ENCODE measurements at regions of chr12 and their contacts with region 1.

Region 1: GRCh38 chr12:4276524-4277204 is 3.1 kb downstream of the CCND2 start:
- DNase-seq: peak; percentile 78 to 86 (median 79)
- H3K4me3 ChIP-seq: peak overlapping the region; percentile 79
- H3K27ac ChIP-seq: no peak overlapping the region
- H3K4me1 ChIP-seq: peaks cover 12% of the 10 kb centered on the region
- H3K27me3 ChIP-seq: no peaks in the 10 kb centered on the region
- CTCF ChIP-seq: peak; percentile 47 to 83 (median 73)
- EP300 ChIP-seq: no peak
- POLR2A ChIP-seq: no peak

Region 2: DNA sequence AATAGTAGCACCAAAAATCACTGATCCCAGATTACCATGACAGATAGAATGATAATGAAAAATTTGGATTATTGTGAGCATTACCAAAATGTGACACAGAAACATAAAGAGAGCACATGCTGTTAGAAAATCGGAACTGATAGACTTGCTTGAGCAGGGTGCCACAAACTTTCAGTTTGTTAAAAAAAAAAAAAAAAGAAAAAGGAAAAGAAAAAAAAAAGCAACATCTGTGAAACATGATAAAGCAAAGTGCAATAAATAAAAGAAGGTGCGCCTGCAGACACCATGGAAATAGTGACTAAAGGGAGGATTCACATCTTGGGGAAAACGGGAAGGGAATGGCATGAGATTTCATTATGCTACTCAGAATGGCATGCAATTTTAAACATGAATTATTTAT is 396.8 kb before region 1 on chr12:
- intact Hi-C with region 1: loop called (anchors 5 to 10 kb)
- DNase-seq: no peak
- H3K4me3 ChIP-seq: no peak overlapping the region
- H3K27ac ChIP-seq: no peak overlapping the region
- H3K4me1 ChIP-seq: peaks cover 2% of the 10 kb centered on the region
- H3K27me3 ChIP-seq: no peaks in the 10 kb centered on the region
- CTCF ChIP-seq: no peak
- EP300 ChIP-seq: no peak
- POLR2A ChIP-seq: no peak

Region 3: GRCh38 chr12:3885277-3886094 is 391.2 kb before region 1 on chr12:
- intact Hi-C with region 1: loop called in 3 of 4 experiments (anchors 5 to 10 kb)
- DNase-seq: peak in 3 of 5 donors; percentile 26 to 46 (median 29)
- H3K4me3 ChIP-seq: peak overlapping the region; percentile 43
- H3K27ac ChIP-seq: peak overlapping the region in 1 of 2 donors; percentile 67
- H3K4me1 ChIP-seq: peaks cover 2% of the 10 kb centered on the region
- H3K27me3 ChIP-seq: no peaks in the 10 kb centered on the region
- CTCF ChIP-seq: peak; percentile 72 to 92 (median 82)
- EP300 ChIP-seq: no peak
- POLR2A ChIP-seq: no peak

Region 4: GRCh38 chr12:4030929-4031702 is 245.5 kb before region 1 on chr12:
- intact Hi-C with region 1: loop called in 2 of 4 experiments (anchors 2 to 10 kb)
- DNase-seq: peak; percentile 77 to 90 (median 86)
- H3K4me3 ChIP-seq: peak overlapping the region; percentile 57
- H3K27ac ChIP-seq: peak overlapping the region; percentile 23 to 33
- H3K4me1 ChIP-seq: peaks cover 7% of the 10 kb centered on the region
- H3K27me3 ChIP-seq: no peaks in the 10 kb centered on the region
- CTCF ChIP-seq: peak in 1 of 3 donors; percentile 18
- EP300 ChIP-seq: no peak
- POLR2A ChIP-seq: no peak

Region 5: GRCh38 chr12:4037747-4038312 is 238.8 kb before region 1 on chr12:
- intact Hi-C with region 1: loop called in 2 of 4 experiments (anchors 2 to 10 kb)
- DNase-seq: peak in 4 of 5 donors; percentile 22 to 55 (median 43)
- H3K4me3 ChIP-seq: no peak overlapping the region
- H3K27ac ChIP-seq: no peak overlapping the region
- H3K4me1 ChIP-seq: no peaks in the 10 kb centered on the region
- H3K27me3 ChIP-seq: no peaks in the 10 kb centered on the region
- CTCF ChIP-seq: peak in 2 of 3 donors; percentile 49 to 77
- EP300 ChIP-seq: no peak
- POLR2A ChIP-seq: no peak

Region 6: DNA sequence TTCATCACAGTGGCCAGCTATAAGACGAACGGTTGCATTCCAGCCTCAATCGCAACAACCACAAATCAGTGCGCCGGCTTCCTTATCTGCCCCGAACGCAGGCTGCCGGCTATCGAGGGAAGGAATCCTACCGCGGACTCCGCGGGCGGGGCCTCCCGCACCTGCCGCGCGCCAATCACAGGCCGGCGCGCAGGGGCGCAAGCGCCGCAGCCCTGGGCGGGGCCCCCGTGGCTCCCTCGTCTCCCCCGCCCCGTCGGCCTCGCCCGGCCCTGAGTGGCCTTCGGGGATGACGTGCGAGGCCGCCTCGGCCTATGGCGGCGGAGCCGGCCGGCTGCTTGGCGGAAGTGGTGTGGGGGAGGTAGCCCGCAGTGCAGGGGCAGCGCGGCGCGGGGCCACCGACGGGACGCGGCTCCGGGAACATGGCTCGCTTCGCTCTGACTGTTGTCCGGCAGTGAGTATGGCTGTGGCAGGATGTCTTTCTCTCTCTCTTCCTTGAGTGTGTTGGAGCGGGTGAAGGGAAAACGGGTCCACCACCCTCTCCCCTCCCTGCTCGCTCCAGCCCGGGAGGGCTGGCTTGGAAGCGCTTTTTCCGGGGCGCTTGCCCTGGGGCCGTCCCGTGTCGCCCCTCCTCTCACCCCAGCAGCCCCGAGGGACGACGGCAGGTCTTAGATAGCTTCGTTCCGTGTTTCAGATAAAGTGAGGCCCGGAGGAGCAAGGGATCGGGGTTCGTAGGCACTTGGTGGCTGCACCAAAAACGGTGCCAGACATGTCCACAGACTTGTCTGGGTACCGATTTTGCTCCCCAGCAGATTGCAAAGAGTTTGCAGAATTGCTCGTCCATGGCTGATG is 44.4 kb after region 1 on chr12 and contains the start of gene TIGAR:
- intact Hi-C with region 1: loop called in 1 of 4 experiments (anchors 2 kb)
- DNase-seq: peak; percentile 86 to 93 (median 87)
- H3K4me3 ChIP-seq: peak within 1 kb of the TSS; percentile 86
- H3K27ac ChIP-seq: no peak within 1 kb of the TSS
- H3K4me1 ChIP-seq: peaks cover 4% of the 10 kb centered on the region
- H3K27me3 ChIP-seq: no peaks in the 10 kb centered on the region
- CTCF ChIP-seq: no peak
- EP300 ChIP-seq: no peak
- POLR2A ChIP-seq: peak; percentile 6
- total RNA-seq, gene TIGAR: 0.36 to 10.3 (median 4.1) TPM